Panc1 (cell line): ENCODE measurements at regions of chrX and their contacts with region 1.

Region 1: DNA sequence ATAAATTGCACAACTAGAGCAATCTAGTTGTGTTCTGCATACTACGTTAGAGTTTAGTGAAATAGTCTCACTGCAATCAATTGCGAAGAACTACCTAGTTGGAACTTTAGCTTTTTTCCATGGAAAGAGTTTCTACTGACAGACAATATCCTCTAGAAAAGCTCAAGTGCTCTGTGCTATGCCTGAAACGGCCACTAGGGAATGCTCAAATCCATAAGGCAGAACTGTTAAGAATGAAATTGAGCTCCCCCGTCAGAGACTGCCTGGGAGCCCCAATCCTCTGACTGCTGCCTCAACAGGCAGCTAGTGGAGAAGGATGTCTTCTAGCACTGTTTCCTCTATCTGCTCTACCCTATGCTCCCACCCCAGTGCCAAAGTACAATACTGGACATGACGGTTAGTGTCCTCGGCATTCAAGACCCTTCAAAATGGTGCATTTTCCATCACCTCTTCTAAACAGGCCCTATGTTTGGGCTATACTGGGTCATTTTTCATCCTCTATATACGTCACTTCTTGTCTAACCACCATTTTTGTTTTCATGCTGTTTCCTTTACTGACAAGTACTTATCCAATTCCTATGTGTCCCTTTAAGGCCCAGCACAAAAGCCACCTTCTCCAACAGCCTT is 35.3 kb downstream of the FRMD7 start:
- DNase-seq: peak; percentile 28
- ATAC-seq: peak; percentile 89
- H3K4me3 ChIP-seq: no peak overlapping the region
- H3K27ac ChIP-seq: no peak overlapping the region
- H3K4me1 ChIP-seq: no peaks in the 10 kb centered on the region
- H3K27me3 ChIP-seq: peaks cover 6% of the 10 kb centered on the region; the same call in 1 of the 2 replicates
- CTCF ChIP-seq: peak; percentile 87

Region 2: DNA sequence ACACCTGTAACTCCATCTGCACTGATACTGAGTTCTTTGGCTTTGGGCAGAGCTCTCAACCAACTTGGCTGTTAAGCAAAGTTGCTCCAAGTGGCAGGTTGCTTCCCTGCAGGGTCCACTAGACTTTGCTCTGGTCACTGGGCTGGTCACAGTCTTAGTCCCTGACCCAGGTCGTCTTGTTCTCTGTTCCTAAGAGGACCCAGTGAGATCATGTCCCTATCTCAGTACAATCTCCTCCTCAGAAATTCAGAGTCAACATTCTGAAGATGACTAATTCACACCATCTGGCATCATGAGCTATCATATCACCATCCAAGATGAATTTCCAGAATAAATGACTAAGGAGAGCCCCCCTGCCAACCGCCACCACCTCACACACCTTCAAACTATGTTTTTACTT is 599.4 kb before region 1 on chrX:
- CTCF ChIA-PET with region 1: no interaction called
- POLR2A ChIA-PET with region 1: no interaction called
- in situ Hi-C with region 1: no loop called
- intact Hi-C with region 1: no loop called
- DNase-seq: no peak
- ATAC-seq: no peak
- H3K4me3 ChIP-seq: no peak overlapping the region
- H3K27ac ChIP-seq: no peak overlapping the region
- H3K4me1 ChIP-seq: no peaks in the 10 kb centered on the region
- H3K27me3 ChIP-seq: no peaks in the 10 kb centered on the region
- CTCF ChIP-seq: no peak

Region 3: GRCh38 chrX:132071260-132071659 is 21.3 kb before region 1 on chrX:
- CTCF ChIA-PET with region 1: no interaction called
- POLR2A ChIA-PET with region 1: no interaction called
- in situ Hi-C with region 1: no loop called
- intact Hi-C with region 1: no loop called
- DNase-seq: no peak
- ATAC-seq: peak; percentile 65; the same call in 1 of the 2 replicates
- H3K4me3 ChIP-seq: no peak overlapping the region
- H3K27ac ChIP-seq: no peak overlapping the region
- H3K4me1 ChIP-seq: no peaks in the 10 kb centered on the region
- H3K27me3 ChIP-seq: no peaks in the 10 kb centered on the region
- CTCF ChIP-seq: peak; percentile 25; the same call in 1 of the 2 replicates

Region 4: DNA sequence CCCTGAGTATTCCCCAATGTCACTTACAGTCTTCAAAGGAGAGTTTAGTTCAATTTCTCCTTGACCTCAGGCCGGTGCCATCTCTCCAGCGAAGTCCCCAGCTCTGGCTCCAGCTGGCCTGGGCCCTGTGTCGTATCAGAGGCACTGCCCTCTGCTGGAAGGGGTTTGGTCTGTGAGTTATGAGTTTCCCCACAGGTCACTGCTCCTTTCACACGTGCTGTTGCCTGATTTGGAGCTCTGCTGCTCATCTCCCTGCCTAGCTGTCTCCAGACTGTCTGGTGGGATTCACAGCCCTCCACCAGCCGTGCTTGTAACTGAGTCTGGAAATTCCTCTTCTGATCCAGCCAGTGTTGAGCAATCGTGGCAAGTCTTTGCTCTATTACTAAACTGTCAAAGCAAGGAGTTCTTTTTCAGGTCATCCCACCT is 126.8 kb after region 1 on chrX and contains the start of gene RAP2C:
- CTCF ChIA-PET with region 1: interaction called, 19 read pairs
- POLR2A ChIA-PET with region 1: no interaction called
- in situ Hi-C with region 1: no loop called
- intact Hi-C with region 1: loop called (anchors 1 kb)
- DNase-seq: peak; percentile 71
- ATAC-seq: peak; percentile 78
- H3K4me3 ChIP-seq: peak within 1 kb of the TSS; percentile 79 to 90
- H3K27ac ChIP-seq: peak within 1 kb of the TSS; percentile 95
- H3K4me1 ChIP-seq: peaks cover 16% of the 10 kb centered on the region
- H3K27me3 ChIP-seq: no peaks in the 10 kb centered on the region
- CTCF ChIP-seq: peak; percentile 82
- total RNA-seq, gene RAP2C: 36.2 TPM

Region 5: GRCh38 chrX:132622130-132622529 is 529.6 kb after region 1 on chrX:
- CTCF ChIA-PET with region 1: no interaction called
- POLR2A ChIA-PET with region 1: no interaction called
- in situ Hi-C with region 1: no loop called
- intact Hi-C with region 1: loop called (anchors 10 kb)
- DNase-seq: no peak
- ATAC-seq: no peak
- H3K4me3 ChIP-seq: no peak overlapping the region
- H3K27ac ChIP-seq: no peak overlapping the region
- H3K4me1 ChIP-seq: no peaks in the 10 kb centered on the region
- H3K27me3 ChIP-seq: peaks cover 5% of the 10 kb centered on the region
- CTCF ChIP-seq: no peak